Transverse colon (tissue), 4 donors: ENCODE measurements at regions of chr17 and their contacts with region 1.

Region 1: GRCh38 chr17:60599620-60600489 is at the start of gene PPM1D:
- DNase-seq: peak; percentile 99
- H3K4me3 ChIP-seq: peak within 1 kb of the TSS; percentile 79 to 94 (median 89)
- H3K27ac ChIP-seq: peak within 1 kb of the TSS; percentile 95 to 98 (median 98)
- H3K4me1 ChIP-seq: peaks cover 6 to 31% (median 13%) of the 10 kb centered on the region in 4 donors
- H3K27me3 ChIP-seq: no peaks in the 10 kb centered on the region
- CTCF ChIP-seq: peak in 3 of 5 experiments; percentile 20 to 66 (median 58)
- EP300 ChIP-seq: no peak
- POLR2A ChIP-seq: peak; percentile 93
- total RNA-seq, gene PPM1D: 4.6 to 25.8 (median 16.0) TPM

Region 2: GRCh38 chr17:60525685-60526514 is 74.0 kb before region 1 on chr17 and contains the start of gene APPBP2:
- in situ Hi-C with region 1: no loop called
- intact Hi-C with region 1: loop called (anchors 2 kb)
- DNase-seq: peak; percentile 88
- H3K4me3 ChIP-seq: peak within 1 kb of the TSS; percentile 75 to 99 (median 82)
- H3K27ac ChIP-seq: peak within 1 kb of the TSS; percentile 97 to 100 (median 98)
- H3K4me1 ChIP-seq: peaks cover 12 to 31% (median 19%) of the 10 kb centered on the region in 4 donors
- H3K27me3 ChIP-seq: no peaks in the 10 kb centered on the region
- CTCF ChIP-seq: peak in 1 of 5 experiments; percentile 15
- EP300 ChIP-seq: no peak
- POLR2A ChIP-seq: peak; percentile 89
- total RNA-seq, gene APPBP2: 10.1 to 24.8 (median 18.4) TPM